ENCODE measurements at regions of chr19 and their contacts with region 1.

Region 1: GRCh38 chr19:3512562-3512961 is 6.5 kb downstream of the FZR1 start:
- DNase-seq: peak in 2 of 10 donors; percentile 32 to 33
- H3K4me3 ChIP-seq: no peak overlapping the region
- H3K27ac ChIP-seq: peak overlapping the region in 38 of 59 donors; percentile 6 to 75 (median 52)
- H3K27me3 ChIP-seq: no peaks in the 10 kb centered on the region
- CTCF ChIP-seq: peak in 23 of 56 donors; percentile 14 to 52 (median 33)

Region 2: GRCh38 chr19:3479834-3480215 is 32.7 kb before region 1 on chr19:
- intact Hi-C with region 1: loop called in 1 of 2 experiments (anchors 1 kb)
- DNase-seq: no peak
- H3K4me3 ChIP-seq: peak overlapping the region in 10 of 59 donors; percentile 3 to 41 (median 26)
- H3K27ac ChIP-seq: no peak overlapping the region
- H3K27me3 ChIP-seq: peaks cover 0 to 37% (median 8%) of the 10 kb centered on the region in 45 donors
- CTCF ChIP-seq: no peak

Region 3: GRCh38 chr19:3572132-3572854 is 59.7 kb after region 1 on chr19:
- intact Hi-C with region 1: no loop called
- DNase-seq: peak; percentile 98 to 100 (median 100)
- H3K4me3 ChIP-seq: peak overlapping the region; percentile 60 to 96 (median 83)
- H3K27ac ChIP-seq: peak overlapping the region in 58 of 59 donors; percentile 40 to 99 (median 93)
- H3K27me3 ChIP-seq: no peaks in the 10 kb centered on the region
- CTCF ChIP-seq: peak in 11 of 56 donors; percentile 6 to 39 (median 21)

Measured in dorsolateral prefrontal cortex (tissue), 120 donors.